ENCODE measurements at regions of chr15 and their contacts with region 1.

Region 1: DNA sequence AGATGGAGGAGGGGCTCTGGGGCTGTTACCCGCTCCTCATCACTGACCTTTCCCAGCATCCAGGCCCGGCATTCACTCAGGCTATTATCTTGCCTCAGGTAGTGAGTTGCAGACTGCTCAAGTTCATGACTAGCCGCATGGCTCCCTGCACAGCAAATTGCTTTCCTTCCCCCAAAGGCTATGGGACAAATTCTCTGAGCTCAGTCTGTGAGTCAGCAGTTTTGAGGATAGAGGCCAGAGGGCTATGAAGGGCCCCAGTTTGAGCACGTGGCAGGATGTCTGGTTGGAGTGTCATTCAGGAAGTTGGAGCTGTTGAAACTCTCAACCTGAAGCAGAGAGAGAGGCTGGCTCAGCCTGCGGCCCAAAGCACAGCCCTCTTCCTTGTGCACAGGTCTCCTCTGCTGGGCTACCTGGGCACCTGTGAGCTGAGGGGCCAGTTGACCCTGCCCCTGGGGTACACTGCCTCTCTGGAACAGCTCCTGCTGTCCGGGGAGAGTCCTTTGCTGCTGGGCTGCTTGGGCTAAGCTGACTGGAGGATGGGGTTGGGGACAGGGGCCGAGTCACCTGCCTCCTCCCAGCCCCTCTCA is 7.9 kb downstream of the FAH start:
- DNase-seq: peak; percentile 58
- H3K4me3 Mint-ChIP-seq: no peak overlapping the region
- H3K27ac Mint-ChIP-seq: peak overlapping the region; percentile 82
- H3K4me1 Mint-ChIP-seq: peaks cover 27% of the 10 kb centered on the region
- H3K27me3 Mint-ChIP-seq: no peaks in the 10 kb centered on the region

Region 2: DNA sequence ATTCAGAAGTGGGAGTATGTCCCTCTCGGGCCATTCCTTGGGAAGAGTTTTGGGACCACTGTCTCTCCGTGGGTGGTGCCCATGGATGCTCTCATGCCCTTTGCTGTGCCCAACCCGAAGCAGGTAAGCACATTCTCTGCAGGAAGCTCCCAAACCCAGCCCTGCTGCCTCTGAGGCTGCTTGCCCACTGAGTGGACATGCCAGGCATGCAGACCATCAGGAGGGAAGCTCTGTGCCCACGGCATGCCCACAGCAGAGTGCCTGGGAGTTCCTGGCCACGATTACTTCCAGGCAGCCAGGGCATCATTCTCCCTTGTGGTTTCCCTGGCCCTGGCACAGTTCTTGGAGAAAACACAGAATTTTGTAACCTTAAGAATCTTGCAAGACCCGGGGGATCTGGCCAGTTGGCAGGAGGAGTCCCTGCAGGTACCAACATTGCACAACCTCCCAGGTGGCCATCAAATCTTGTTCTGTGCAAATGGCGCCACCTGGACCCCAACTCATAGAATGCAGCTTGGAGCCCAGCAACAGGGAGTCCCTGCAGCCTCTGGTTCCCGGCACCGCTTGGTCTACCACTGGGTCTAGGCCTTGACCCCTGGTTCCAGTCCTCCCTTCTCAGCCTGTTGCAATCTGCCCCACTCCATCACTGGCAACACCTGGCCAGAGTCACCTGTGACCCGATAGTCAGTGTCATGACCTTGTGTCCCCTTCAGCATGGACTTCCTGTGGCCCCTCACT is 12.5 kb after region 1 on chr15:
- CTCF ChIA-PET with region 1: interaction called, 11 read pairs
- POLR2A ChIA-PET with region 1: interaction called, 3 read pairs
- DNase-seq: peak; percentile 80
- H3K4me3 Mint-ChIP-seq: no peak overlapping the region
- H3K27ac Mint-ChIP-seq: no peak overlapping the region
- H3K4me1 Mint-ChIP-seq: peaks cover 2% of the 10 kb centered on the region
- H3K27me3 Mint-ChIP-seq: no peaks in the 10 kb centered on the region

Measured in activated CD4-positive, alpha-beta T cell treated with anti-CD3 and anti-CD28 coated beads, Interleukin-2, amount 10 ng/mL, durations not matched to agents 7 days and 5 days (primary cell).